Right ventricle myocardium superior (tissue), 1 donor: ENCODE measurements at regions of chr19 and their contacts with region 1.

Region 1: DNA sequence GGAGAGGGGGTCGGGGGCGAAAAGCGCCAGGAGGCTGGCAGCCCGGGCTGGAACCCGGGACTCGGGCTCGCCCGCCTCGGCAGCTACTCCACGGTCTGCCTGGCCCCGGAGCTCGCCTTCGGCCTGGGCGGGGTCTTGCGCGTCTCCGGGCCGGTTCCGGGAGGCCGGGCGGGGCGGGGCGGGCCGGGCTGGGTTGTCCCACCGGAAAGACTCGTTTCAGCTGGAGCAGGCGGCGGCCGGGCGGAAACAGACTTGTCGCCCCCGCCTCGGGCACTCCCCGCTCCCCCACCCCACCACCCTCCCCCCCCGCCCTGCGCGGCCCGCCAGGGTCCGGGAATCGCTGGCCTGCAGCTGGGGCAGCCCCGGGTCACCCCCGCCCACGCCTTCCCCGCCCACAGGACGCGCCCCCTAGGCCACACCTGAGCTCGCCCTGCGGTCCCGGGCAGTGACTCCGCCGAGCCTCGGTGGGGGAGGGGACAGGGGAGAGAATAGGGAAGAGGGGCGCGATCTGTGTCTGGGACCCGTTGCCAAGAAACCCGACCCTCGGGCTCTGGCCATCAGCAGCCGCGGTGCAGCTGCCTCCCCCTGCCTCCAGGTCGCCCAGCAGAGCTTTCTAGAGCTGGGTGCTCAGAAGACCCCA is 109.4 kb downstream of the KCTD15 start:
- DNase-seq: peak; percentile 82
- ATAC-seq: peak; percentile 96

Region 2: DNA sequence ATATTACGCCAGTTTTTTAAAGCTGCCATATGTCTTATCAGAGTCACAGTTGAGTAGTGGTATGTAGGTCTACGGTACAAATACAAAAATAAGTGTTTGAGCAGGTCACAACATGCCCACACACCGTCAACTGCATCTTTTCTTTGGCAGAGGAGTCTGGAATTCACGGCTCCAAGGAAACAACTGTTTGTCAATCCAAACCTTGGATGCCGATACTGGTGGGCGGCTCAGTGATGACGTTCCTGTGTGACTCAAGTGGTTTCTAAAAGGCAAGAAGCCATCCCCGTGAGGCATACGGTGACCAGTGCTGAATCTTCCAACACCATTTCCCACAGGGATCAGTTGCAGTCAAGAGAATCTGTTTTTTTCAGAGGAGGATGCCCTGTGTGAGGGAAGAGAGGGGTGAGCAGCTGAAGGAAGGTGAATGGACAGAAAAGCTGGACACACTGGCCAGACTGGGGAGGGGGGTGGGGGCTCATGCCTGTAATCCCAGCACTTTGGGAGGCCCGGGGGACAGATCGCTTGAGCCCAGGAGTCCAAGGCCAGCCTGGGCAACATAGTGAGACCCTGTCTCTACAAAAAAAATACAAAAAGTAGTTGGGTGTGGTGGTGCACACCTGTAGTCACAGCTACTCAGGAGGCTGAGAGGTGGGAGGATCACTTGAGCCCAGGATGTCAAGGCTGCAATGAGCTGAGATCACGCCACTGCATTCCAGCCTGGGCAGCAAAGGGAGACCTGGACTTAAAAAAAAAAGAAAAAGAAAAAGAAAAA is 555.3 kb before region 1 on chr19:
- intact Hi-C with region 1: no loop called
- DNase-seq: no peak
- ATAC-seq: peak; percentile 29

Region 3: DNA sequence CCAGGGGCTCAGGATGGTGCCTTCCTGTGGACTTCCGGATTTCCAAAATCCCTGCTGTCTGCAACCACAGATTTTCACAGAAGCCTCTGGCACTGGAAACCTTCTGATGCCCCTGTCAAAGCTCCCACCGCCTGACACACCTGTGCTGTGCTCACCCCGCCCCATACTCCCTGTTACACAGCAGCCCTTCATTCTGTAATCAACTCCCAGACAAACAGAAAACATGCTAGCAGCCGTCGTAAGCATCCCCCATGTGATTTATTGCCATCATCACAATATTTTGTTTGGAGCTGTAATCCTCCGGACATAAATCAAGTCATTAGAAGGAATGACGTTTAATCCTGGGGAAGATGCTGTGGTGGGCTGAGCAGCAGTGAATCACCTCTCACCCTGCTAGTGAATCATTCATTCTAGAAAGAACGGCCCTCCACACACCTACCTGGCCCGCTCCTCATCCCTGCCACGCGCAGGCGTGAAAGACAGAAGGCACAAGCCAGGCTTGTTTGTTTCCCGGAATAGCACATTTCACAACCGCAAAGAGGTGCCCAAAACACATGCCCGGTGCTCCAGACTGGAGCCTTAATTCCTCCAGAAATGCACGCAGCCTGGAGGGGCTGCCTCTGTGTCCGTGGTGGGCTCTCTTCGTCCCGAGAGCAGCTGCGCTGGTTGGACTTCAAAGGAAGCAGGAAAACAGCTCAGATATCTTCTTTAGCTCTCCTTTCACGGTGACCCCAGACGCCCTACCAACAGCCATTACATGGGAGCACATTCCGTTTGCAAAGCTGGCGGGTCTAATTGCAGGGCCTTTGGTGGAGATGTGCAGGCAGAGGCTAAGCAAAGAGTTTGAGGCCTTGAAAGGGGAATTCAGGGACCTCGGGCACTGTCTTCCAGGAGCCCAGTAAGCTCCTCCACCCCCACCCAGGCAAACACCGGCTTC is 150.7 kb before region 1 on chr19:
- intact Hi-C with region 1: no loop called
- DNase-seq: no peak
- ATAC-seq: no peak

Region 4: DNA sequence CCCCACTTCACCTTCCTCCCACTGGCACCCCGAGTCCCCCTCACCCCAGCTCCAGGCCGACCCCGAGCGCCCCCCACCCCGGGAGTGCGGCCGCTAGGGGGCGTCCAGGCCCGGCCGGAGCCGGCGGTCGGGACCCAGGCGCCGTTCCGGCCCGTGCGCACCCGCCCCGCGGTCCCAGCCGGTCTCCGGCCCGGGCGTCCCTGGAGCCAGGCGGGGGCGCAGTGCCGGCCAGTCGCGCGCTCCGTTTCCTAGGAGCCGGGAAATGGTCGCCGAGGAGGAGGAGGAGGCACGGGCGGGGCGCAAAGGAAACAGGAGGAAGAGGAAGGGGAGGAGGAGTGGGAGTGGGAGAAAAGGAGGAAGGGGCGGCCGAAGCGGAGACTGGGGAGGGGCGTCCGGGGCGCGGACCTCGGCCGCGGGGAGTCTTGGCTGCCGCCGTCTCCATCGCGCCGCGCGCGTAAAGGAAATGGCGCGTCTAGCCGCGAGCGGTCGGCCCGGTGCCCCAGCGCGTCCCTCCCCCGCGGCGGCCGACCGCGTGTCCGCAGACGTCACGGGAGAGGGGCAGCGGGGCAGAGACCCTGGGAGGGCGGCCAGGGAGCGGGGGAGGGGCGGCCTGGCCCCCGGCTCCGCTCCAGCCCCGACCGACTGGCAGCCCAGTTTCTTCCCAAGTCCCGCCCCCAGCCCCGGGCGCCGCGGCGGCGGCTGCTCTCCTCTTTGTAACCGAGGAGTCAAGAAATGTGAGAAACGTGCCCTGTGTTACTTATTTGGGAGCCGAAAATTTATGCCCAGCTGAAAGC is 110.5 kb before region 1 on chr19:
- intact Hi-C with region 1: loop called (anchors 10 kb)
- DNase-seq: peak; percentile 91
- ATAC-seq: peak; percentile 88

Region 5: GRCh38 chr19:33883859-33884519 is 22.1 kb before region 1 on chr19:
- intact Hi-C with region 1: no loop called
- DNase-seq: no peak
- ATAC-seq: peak; percentile 46